ENCODE measurements at regions of chr22 and their contacts with region 1.

Region 1: GRCh38 chr22:43399338-43399979 is 12.4 kb upstream of the MPPED1 start:
- DNase-seq: no peak
- ATAC-seq: peak in 1 of 8 donors; percentile 14
- H3K4me3 ChIP-seq: no peak overlapping the region
- H3K27ac ChIP-seq: no peak overlapping the region
- H3K4me1 ChIP-seq: peaks cover 0 to 6% (median 0%) of the 10 kb centered on the region in 9 donors
- H3K27me3 ChIP-seq: peaks cover 0 to 33% (median 0%) of the 10 kb centered on the region in 7 donors
- CTCF ChIP-seq: no peak

Region 2: DNA sequence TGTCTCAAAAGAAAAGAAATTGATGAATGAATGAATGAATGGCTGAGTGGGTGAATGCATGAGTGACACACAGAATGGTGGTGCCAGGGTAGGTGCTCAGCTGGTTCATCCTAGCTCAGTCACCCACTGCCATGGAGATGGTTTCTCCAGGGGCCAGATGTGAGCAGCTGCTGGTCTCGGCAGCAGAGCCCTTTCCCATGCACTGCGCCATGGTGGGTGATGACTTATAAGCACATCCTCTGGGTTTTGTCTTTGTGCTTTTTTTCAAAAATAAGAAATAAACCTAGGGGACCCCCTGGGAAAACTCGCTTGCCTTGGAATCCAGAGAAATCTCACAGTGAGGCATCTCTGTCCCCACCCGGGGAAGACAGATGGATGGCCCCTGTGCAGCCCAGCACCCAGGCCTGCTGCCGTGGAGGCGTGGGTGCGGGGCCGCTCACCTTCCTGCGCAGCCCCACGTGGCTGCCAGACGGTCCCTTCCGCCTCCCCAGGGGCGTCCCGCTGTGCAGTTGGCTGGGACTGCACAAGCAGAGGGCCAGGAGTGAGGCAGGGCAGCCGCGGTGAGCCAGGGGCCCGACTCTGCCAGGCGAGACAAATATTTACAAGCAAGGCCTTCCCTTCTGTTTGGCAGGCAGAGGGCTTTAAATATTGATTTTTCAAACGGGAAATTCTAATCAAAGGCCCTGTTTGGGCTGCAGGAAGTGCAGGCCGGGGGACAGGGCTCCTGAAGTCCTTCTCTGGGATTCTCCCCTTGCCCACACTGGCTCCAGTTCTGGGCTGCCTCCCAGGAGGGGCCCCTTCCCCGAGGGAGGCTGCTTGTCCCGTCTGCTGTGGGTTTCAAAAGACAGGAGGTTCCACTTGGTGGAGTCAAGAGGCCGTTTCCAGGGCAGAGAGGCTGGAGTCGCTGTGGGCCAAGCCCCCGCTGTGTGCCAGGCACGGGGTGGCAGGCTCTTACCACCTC is 36.7 kb after region 1 on chr22:
- intact Hi-C with region 1: no loop called
- DNase-seq: no peak
- ATAC-seq: no peak
- H3K4me3 ChIP-seq: no peak overlapping the region
- H3K27ac ChIP-seq: no peak overlapping the region
- H3K4me1 ChIP-seq: no peaks in the 10 kb centered on the region
- H3K27me3 ChIP-seq: peaks cover 0 to 61% (median 43%) of the 10 kb centered on the region in 7 donors
- CTCF ChIP-seq: no peak

Region 3: GRCh38 chr22:43812149-43812842 is 412.8 kb after region 1 on chr22 and contains the start of gene EFCAB6:
- intact Hi-C with region 1: loop called in 1 of 10 experiments (anchors 10 kb)
- DNase-seq: peak; percentile 91 to 95
- ATAC-seq: peak; percentile 97 to 99 (median 98)
- H3K4me3 ChIP-seq: peak within 1 kb of the TSS; percentile 56 to 99 (median 84)
- H3K27ac ChIP-seq: peak within 1 kb of the TSS; percentile 54 to 94 (median 82)
- H3K4me1 ChIP-seq: peaks cover 5 to 21% (median 16%) of the 10 kb centered on the region in 9 donors
- H3K27me3 ChIP-seq: no peaks in the 10 kb centered on the region
- CTCF ChIP-seq: no peak
- total RNA-seq, gene EFCAB6: 1.0 to 4.3 (median 1.9) TPM

Region 4: DNA sequence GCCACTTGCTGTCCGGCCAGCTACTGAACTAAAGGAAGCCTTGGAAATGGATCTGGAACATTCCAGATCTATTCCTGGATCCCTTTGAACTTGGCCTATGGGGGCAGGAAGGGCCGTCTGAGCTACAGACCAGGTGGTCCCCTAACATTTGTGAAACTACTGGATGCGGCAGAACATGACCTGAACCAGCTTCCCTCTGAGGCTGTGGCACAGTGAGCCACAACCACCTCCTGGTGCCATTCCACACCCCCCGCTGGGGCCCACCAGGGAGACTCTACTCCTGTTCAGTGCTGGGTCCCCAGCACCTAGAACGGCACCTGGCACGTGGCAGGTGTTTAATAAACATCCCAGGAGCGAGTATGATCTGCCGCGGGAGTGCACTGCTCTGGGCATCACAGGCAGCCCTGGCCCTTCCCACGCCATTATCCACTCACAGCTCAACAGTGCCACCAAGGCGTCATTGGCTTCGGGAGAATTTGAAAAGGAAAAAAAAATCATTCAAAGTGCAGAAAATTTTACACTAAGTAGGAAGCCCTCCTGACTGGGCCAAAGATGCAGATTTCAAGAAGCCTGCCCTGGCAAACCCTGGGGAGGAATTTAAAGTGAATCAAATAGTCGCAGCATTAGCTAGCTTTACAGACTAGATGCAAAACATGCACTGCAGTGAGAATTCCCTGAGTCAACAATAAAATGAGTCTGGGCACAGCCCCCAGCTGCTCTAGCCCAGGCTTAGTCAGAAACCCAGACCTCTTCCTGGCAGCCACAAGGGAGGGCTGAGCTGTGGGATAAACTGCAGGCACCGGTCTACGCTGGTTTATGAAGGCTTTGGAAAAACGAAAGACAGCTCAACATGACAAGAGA is 426.9 kb after region 1 on chr22:
- intact Hi-C with region 1: loop called in 1 of 10 experiments (anchors 10 kb)
- DNase-seq: no peak
- ATAC-seq: no peak
- H3K4me3 ChIP-seq: no peak overlapping the region
- H3K27ac ChIP-seq: no peak overlapping the region
- H3K4me1 ChIP-seq: peaks cover 11 to 28% (median 17%) of the 10 kb centered on the region in 9 donors
- H3K27me3 ChIP-seq: peaks cover 0 to 41% (median 18%) of the 10 kb centered on the region in 7 donors
- CTCF ChIP-seq: peak in 6 of 9 donors; percentile 8 to 49 (median 34)

Region 5: DNA sequence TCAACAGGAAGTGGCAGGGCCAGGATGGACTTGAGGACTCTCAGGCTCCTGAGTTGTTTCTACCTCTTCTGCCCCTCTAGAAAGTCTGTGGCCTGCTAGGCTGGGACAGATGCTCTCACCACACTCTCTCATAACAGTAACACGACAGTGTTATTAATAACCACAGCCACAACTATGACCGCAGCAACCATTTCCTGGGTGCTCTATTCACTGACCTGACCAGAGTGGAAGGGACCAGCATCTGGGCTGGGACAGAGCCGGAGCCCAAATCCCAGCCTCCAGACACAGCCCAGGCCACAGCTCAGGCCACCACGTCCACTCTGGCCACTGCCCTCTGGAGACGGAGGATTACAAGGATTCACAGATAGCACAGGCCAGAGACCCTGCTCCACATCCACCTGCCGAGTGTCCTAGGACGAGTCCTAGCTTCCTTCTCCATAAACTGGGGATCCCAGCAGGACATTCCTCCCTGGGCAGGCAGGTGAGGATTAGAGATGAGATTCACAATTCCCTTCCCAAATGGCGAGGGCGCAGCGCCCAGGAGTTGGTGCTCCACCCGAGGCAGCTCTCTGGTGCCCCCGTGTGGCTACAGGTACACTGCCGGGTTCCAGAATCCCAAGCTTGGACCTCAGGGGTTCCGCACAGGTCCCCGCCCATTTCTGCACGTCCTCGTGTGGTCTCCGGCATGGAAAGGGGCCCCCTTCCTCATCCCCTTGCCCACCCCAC is 485.3 kb after region 1 on chr22:
- intact Hi-C with region 1: loop called in 1 of 10 experiments (anchors 10 kb)
- DNase-seq: peak; percentile 49 to 71
- ATAC-seq: peak in 6 of 8 donors; percentile 33 to 66 (median 52)
- H3K4me3 ChIP-seq: no peak overlapping the region
- H3K27ac ChIP-seq: no peak overlapping the region
- H3K4me1 ChIP-seq: no peaks in the 10 kb centered on the region
- H3K27me3 ChIP-seq: peaks cover 6 to 64% (median 32%) of the 10 kb centered on the region in 7 donors
- CTCF ChIP-seq: peak; percentile 52 to 85 (median 76)

Region 6: GRCh38 chr22:44625981-44626687 is 1226.7 kb after region 1 on chr22:
- intact Hi-C with region 1: loop called in 2 of 10 experiments (anchors 10 kb)
- DNase-seq: peak; percentile 63 to 76
- ATAC-seq: peak; percentile 58 to 85 (median 70)
- H3K4me3 ChIP-seq: no peak overlapping the region
- H3K27ac ChIP-seq: no peak overlapping the region
- H3K4me1 ChIP-seq: peaks cover 0 to 5% (median 0%) of the 10 kb centered on the region in 9 donors
- H3K27me3 ChIP-seq: peaks cover 0 to 23% (median 5%) of the 10 kb centered on the region in 7 donors
- CTCF ChIP-seq: peak; percentile 94 to 98 (median 97)

Measured in heart right ventricle (tissue), 16 donors.